GM12878 (cell line): ENCODE measurements at regions of chr1 and their contacts with region 1.

Region 1: GRCh38 chr1:226877669-226878068 is 7.3 kb downstream of the PSEN2 start:
- DNase-seq: no peak
- ATAC-seq: no peak
- H3K4me3 ChIP-seq: no peak overlapping the region
- H3K27ac ChIP-seq: no peak overlapping the region
- H3K4me1 ChIP-seq: peaks cover 10% of the 10 kb centered on the region
- H3K27me3 ChIP-seq: no peaks in the 10 kb centered on the region
- CTCF ChIP-seq: no peak
- EP300 ChIP-seq: no peak
- POLR2A ChIP-seq: no peak
- RAD21 ChIP-seq: no peak

Region 2: DNA sequence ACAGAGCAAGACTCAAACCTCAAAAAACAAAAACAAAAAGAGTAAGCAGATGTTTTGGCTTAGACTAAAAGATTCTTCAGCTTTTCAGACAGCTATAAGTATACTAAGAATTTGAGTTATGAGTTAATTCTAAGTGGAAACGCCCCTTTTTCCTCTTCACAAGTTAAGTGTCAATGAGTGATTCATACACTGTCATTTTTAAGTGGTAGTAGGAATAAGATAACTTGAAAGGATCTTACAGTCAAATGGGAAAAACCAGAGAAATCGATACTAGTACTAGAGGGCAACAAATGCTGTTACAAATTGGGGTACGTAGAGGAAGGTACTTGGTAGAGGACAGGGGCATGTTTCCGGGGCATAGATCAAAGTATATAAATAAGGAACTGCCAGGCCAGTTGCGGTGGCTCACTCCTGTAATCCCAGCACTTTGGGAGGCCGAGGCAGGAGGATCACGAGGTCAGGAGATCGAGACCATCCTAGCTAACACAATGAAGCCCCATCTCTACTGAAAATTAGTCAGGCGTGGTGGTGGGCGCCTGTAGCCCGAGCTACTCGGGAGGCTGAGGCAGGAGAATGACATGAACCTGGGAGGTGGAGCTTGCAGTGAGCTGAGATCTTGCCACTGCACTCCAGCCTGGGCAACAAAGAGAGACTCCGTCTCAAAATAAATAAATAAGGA is 807.7 kb before region 1 on chr1:
- CTCF ChIA-PET with region 1: no interaction called
- POLR2A ChIA-PET with region 1: interaction called, 10 read pairs
- RAD21 ChIA-PET with region 1: no interaction called
- SMC1A ChIA-PET with region 1: no interaction called
- in situ Hi-C with region 1: no loop called
- intact Hi-C with region 1: no loop called
- DNase-seq: no peak
- ATAC-seq: no peak
- H3K4me3 ChIP-seq: no peak overlapping the region
- H3K27ac ChIP-seq: no peak overlapping the region
- H3K4me1 ChIP-seq: peaks cover 11% of the 10 kb centered on the region
- H3K27me3 ChIP-seq: no peaks in the 10 kb centered on the region
- CTCF ChIP-seq: no peak
- EP300 ChIP-seq: no peak
- POLR2A ChIP-seq: no peak
- RAD21 ChIP-seq: no peak